B cell (primary cell): ENCODE measurements at regions of chr14 and their contacts with region 1.

Region 1: GRCh38 chr14:92456215-92457015 is 57.2 kb upstream of the RIN3 start:
- DNase-seq: peak; percentile 42
- ATAC-seq: peak; percentile 61
- H3K4me3 ChIP-seq: no peak overlapping the region
- H3K4me3 Mint-ChIP-seq: no peak overlapping the region
- H3K27ac ChIP-seq: no peak overlapping the region
- H3K27ac Mint-ChIP-seq: no peak overlapping the region
- H3K4me1 ChIP-seq: peaks cover 9 to 11% of the 10 kb centered on the region in 2 donors
- H3K4me1 Mint-ChIP-seq: peaks cover 7% of the 10 kb centered on the region
- H3K27me3 ChIP-seq: peaks cover 0 to 18% (median 5%) of the 10 kb centered on the region in 4 experiments
- H3K27me3 Mint-ChIP-seq: peaks cover 15% of the 10 kb centered on the region
- CTCF ChIP-seq: peak; percentile 21

Region 2: GRCh38 chr14:92135267-92135666 is 321.1 kb before region 1 on chr14:
- CTCF ChIA-PET with region 1: interaction called, 4 read pairs
- POLR2A ChIA-PET with region 1: no interaction called
- intact Hi-C with region 1: loop called (anchors 5 kb)
- DNase-seq: peak; percentile 29
- ATAC-seq: no peak
- H3K4me3 ChIP-seq: no peak overlapping the region
- H3K4me3 Mint-ChIP-seq: no peak overlapping the region
- H3K27ac ChIP-seq: no peak overlapping the region
- H3K27ac Mint-ChIP-seq: no peak overlapping the region
- H3K4me1 ChIP-seq: no peaks in the 10 kb centered on the region
- H3K4me1 Mint-ChIP-seq: no peaks in the 10 kb centered on the region
- H3K27me3 ChIP-seq: no peaks in the 10 kb centered on the region
- H3K27me3 Mint-ChIP-seq: no peaks in the 10 kb centered on the region
- CTCF ChIP-seq: peak; percentile 46

Region 3: DNA sequence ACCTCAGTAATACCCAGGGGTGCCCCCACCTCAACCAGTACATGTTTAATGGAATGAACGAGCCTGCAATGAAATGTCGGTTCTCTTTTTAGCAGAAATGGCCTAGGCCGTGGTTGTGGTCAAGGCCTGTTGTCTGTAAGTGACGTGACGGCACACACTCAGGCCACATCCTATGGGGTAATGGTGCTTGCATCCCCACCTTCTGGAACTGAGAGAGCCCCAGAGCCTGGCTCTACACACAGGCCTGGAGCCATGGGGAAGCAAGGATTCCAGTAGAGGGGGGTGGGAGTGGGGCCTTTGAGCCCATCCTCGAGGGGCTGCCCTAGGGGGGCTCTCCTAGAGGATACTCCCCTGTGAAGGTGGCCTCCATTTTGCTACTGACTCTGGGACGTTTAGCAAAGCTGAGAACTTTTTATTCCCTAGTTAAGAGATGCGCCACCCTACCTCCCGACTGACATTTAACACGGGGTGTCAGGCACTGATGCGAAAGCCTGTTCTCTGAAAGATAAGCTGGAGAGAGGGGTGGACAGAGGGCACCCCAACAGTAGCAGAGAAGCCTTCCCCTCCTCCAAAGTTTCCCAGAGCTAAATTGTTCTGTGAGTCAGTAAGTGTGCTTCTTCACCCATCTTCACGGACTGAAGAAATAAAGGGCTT is 63.8 kb after region 1 on chr14:
- CTCF ChIA-PET with region 1: no interaction called
- POLR2A ChIA-PET with region 1: no interaction called
- intact Hi-C with region 1: no loop called
- DNase-seq: no peak
- ATAC-seq: no peak
- H3K4me3 ChIP-seq: no peak overlapping the region
- H3K4me3 Mint-ChIP-seq: no peak overlapping the region
- H3K27ac ChIP-seq: no peak overlapping the region
- H3K27ac Mint-ChIP-seq: no peak overlapping the region
- H3K4me1 ChIP-seq: peaks cover 20 to 30% of the 10 kb centered on the region in 2 donors
- H3K4me1 Mint-ChIP-seq: peaks cover 39% of the 10 kb centered on the region
- H3K27me3 ChIP-seq: no peaks in the 10 kb centered on the region
- H3K27me3 Mint-ChIP-seq: no peaks in the 10 kb centered on the region
- CTCF ChIP-seq: no peak